CD4-positive, alpha-beta T cell (primary cell): ENCODE measurements at regions of chr2 and their contacts with region 1.

Region 1: GRCh38 chr2:74958274-74959105 is at the start of gene POLE4:
- DNase-seq: peak; percentile 89 to 96 (median 92)
- ATAC-seq: peak; percentile 87
- H3K4me3 ChIP-seq: peak within 1 kb of the TSS; percentile 60
- H3K4me3 Mint-ChIP-seq: peak within 1 kb of the TSS; percentile 87
- H3K27ac ChIP-seq: peak within 1 kb of the TSS; percentile 73 to 86
- H3K27ac Mint-ChIP-seq: peak within 1 kb of the TSS; percentile 83
- H3K4me1 ChIP-seq: peaks cover 22% of the 10 kb centered on the region
- H3K4me1 Mint-ChIP-seq: peaks cover 71% of the 10 kb centered on the region
- H3K27me3 ChIP-seq: no peaks in the 10 kb centered on the region
- H3K27me3 Mint-ChIP-seq: no peaks in the 10 kb centered on the region
- CTCF ChIP-seq: no peak
- total RNA-seq, gene POLE4: 34.9 to 38.4 TPM

Region 2: DNA sequence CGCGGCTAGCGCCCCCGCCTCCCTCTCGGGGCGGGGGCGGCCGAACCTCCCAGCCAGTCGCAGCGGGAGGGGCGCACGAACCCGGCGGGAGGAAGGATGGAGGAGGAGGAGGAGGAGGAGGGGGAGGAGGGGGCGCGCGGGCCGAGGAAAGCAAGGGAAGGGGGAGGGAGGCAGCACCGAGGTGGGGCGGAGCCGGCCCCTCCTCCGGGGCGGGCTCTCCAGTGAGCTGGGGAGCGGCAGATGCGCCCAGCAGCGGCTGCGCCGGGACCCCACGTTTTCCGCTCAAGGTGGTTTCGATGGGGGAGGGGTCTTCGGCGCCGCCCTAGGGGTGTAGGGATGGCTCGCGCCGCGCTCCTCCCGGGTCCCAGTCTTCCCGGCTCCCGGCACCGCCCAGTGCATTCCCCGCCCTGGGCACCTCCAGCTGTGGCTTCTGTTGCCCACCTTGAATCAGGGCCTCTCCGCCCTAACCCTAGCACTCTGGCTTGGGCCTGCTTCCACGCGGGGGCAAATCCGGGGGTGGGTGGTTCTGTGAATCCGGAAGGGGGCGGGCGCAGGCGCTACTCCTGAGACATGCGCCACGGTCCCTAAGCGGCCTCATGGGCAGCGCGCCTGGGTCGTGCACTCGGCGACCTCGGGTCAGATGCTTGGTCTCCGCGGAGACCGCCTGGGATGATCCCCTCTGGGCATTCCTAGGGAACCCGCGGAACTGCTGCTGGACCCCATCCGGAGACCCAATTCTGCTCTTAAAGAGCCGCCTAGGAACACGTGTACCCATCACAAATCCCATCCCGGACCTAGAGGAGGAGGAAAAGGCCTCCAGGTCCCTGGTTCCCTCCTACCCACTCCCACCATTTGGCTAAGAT is 1674.0 kb before region 1 on chr2 and contains the start of gene FBXO41:
- CTCF ChIA-PET with region 1: no interaction called
- POLR2A ChIA-PET with region 1: no interaction called
- intact Hi-C with region 1: loop called in 1 of 2 experiments (anchors 10 kb)
- DNase-seq: peak; percentile 36 to 79 (median 59)
- ATAC-seq: peak; percentile 79
- H3K4me3 ChIP-seq: peak within 1 kb of the TSS; percentile 73
- H3K4me3 Mint-ChIP-seq: peak within 1 kb of the TSS; percentile 91
- H3K27ac ChIP-seq: peak within 1 kb of the TSS in 1 of 2 donors; percentile 33
- H3K27ac Mint-ChIP-seq: peak within 1 kb of the TSS; percentile 37
- H3K4me1 ChIP-seq: peaks cover 22% of the 10 kb centered on the region
- H3K4me1 Mint-ChIP-seq: peaks cover 22% of the 10 kb centered on the region
- H3K27me3 ChIP-seq: no peaks in the 10 kb centered on the region
- H3K27me3 Mint-ChIP-seq: peaks cover 15% of the 10 kb centered on the region
- CTCF ChIP-seq: no peak
- total RNA-seq, gene FBXO41: 14.0 to 16.0 TPM

Region 3: GRCh38 chr2:74653985-74654882 is 304.3 kb before region 1 on chr2 and contains the start of gene SEMA4F:
- CTCF ChIA-PET with region 1: no interaction called
- POLR2A ChIA-PET with region 1: no interaction called
- intact Hi-C with region 1: loop called in 1 of 2 experiments (anchors 5 kb)
- DNase-seq: peak; percentile 83 to 96 (median 92)
- ATAC-seq: peak; percentile 99
- H3K4me3 ChIP-seq: peak within 1 kb of the TSS; percentile 80
- H3K4me3 Mint-ChIP-seq: peak within 1 kb of the TSS; percentile 88
- H3K27ac ChIP-seq: no peak within 1 kb of the TSS
- H3K27ac Mint-ChIP-seq: peak within 1 kb of the TSS; percentile 80
- H3K4me1 ChIP-seq: peaks cover 18% of the 10 kb centered on the region
- H3K4me1 Mint-ChIP-seq: peaks cover 26% of the 10 kb centered on the region
- H3K27me3 ChIP-seq: peaks cover 2 to 5% of the 10 kb centered on the region in 2 experiments
- H3K27me3 Mint-ChIP-seq: peaks cover 14% of the 10 kb centered on the region
- CTCF ChIP-seq: no peak
- total RNA-seq, gene SEMA4F: 6.8 to 7.3 TPM

Region 4: GRCh38 chr2:74845217-74846011 is 113.1 kb before region 1 on chr2:
- CTCF ChIA-PET with region 1: no interaction called
- POLR2A ChIA-PET with region 1: no interaction called
- intact Hi-C with region 1: loop called in 1 of 2 experiments (anchors 10 kb)
- DNase-seq: peak in 10 of 14 experiments; percentile 13 to 79 (median 42)
- ATAC-seq: no peak
- H3K4me3 ChIP-seq: peak overlapping the region; percentile 5
- H3K4me3 Mint-ChIP-seq: peak overlapping the region; percentile 84
- H3K27ac ChIP-seq: no peak overlapping the region
- H3K27ac Mint-ChIP-seq: peak overlapping the region; percentile 98
- H3K4me1 ChIP-seq: peaks cover 96% of the 10 kb centered on the region
- H3K4me1 Mint-ChIP-seq: peaks cover 99% of the 10 kb centered on the region
- H3K27me3 ChIP-seq: no peaks in the 10 kb centered on the region
- H3K27me3 Mint-ChIP-seq: no peaks in the 10 kb centered on the region
- CTCF ChIP-seq: no peak

Region 5: GRCh38 chr2:75162897-75163296 is 204.4 kb after region 1 on chr2:
- CTCF ChIA-PET with region 1: no interaction called
- POLR2A ChIA-PET with region 1: no interaction called
- intact Hi-C with region 1: no loop called
- DNase-seq: peak in 2 of 14 experiments; percentile 13 to 23
- ATAC-seq: no peak
- H3K4me3 ChIP-seq: no peak overlapping the region
- H3K4me3 Mint-ChIP-seq: no peak overlapping the region
- H3K27ac ChIP-seq: no peak overlapping the region
- H3K27ac Mint-ChIP-seq: no peak overlapping the region
- H3K4me1 ChIP-seq: no peaks in the 10 kb centered on the region
- H3K4me1 Mint-ChIP-seq: no peaks in the 10 kb centered on the region
- H3K27me3 ChIP-seq: no peaks in the 10 kb centered on the region
- H3K27me3 Mint-ChIP-seq: peaks cover 5% of the 10 kb centered on the region
- CTCF ChIP-seq: no peak

Region 6: DNA sequence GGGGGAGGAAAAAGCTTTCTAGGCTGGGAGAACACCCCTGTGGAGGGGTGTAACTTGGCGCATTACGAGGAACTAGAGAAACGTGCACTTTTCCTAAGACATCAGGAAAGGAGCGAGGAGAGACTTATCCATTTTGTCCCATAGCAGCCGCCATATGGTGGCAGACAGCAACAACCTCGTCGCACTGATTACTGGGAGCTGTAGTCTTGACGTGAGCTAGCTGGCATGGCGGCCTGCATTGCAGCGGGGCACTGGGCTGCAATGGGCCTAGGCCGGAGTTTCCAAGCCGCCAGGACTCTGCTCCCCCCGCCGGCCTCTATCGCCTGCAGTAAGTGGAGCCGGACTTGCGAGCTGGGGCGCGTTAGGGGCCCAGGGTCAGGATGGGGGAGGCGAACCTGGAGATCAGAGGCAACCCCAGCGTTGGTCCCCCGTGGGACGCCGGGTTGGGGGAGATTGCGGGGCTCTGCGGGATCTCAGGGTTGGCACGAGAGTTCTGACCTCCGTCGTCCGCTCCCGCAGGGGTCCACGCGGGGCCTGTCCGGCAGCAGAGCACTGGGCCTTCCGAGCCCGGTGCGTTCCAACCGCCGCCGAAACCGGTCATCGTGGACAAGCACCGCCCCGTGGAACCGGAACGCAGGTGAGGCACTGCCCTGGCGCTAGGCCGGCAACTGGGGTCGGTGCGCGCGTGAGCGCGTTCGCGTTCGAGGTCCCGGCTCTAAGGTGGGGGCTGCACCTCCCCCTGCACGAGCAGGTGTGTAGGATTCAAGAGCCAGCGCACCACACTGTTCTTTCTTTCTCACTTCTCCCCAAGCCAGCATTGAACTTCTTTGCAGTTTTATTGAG is 688.3 kb after region 1 on chr2 and contains the start of gene MRPL19:
- CTCF ChIA-PET with region 1: no interaction called
- POLR2A ChIA-PET with region 1: no interaction called
- intact Hi-C with region 1: loop called in 1 of 2 experiments (anchors 5 kb)
- DNase-seq: peak; percentile 52 to 89 (median 68)
- ATAC-seq: peak; percentile 96
- H3K4me3 ChIP-seq: peak within 1 kb of the TSS; percentile 98
- H3K4me3 Mint-ChIP-seq: peak within 1 kb of the TSS; percentile 96
- H3K27ac ChIP-seq: peak within 1 kb of the TSS; percentile 46 to 50
- H3K27ac Mint-ChIP-seq: peak within 1 kb of the TSS; percentile 92
- H3K4me1 ChIP-seq: peaks cover 16% of the 10 kb centered on the region
- H3K4me1 Mint-ChIP-seq: peaks cover 49% of the 10 kb centered on the region
- H3K27me3 ChIP-seq: no peaks in the 10 kb centered on the region
- H3K27me3 Mint-ChIP-seq: no peaks in the 10 kb centered on the region
- CTCF ChIP-seq: no peak
- total RNA-seq, gene MRPL19: 10.7 to 14.9 TPM

Region 7: GRCh38 chr2:75710577-75711253 is 752.2 kb after region 1 on chr2 and contains the start of gene GCFC2:
- CTCF ChIA-PET with region 1: no interaction called
- POLR2A ChIA-PET with region 1: no interaction called
- intact Hi-C with region 1: loop called in 1 of 2 experiments (anchors 5 kb)
- DNase-seq: peak; percentile 65 to 91 (median 77)
- ATAC-seq: peak; percentile 84
- H3K4me3 ChIP-seq: peak within 1 kb of the TSS; percentile 79
- H3K4me3 Mint-ChIP-seq: peak within 1 kb of the TSS; percentile 97
- H3K27ac ChIP-seq: peak within 1 kb of the TSS; percentile 66 to 77
- H3K27ac Mint-ChIP-seq: peak within 1 kb of the TSS; percentile 98
- H3K4me1 ChIP-seq: peaks cover 8% of the 10 kb centered on the region
- H3K4me1 Mint-ChIP-seq: peaks cover 41% of the 10 kb centered on the region
- H3K27me3 ChIP-seq: no peaks in the 10 kb centered on the region
- H3K27me3 Mint-ChIP-seq: no peaks in the 10 kb centered on the region
- CTCF ChIP-seq: peak; percentile 54
- total RNA-seq, gene GCFC2: 15.7 to 17.1 TPM